Activated CD4-positive, alpha-beta T cell treated with anti-CD3 and anti-CD28 coated beads, Interleukin-2, amount 10 ng/mL, durations not matched to agents 24 days and 14 days (primary cell): ENCODE measurements at regions of chr9 and their contacts with region 1.

Region 1: DNA sequence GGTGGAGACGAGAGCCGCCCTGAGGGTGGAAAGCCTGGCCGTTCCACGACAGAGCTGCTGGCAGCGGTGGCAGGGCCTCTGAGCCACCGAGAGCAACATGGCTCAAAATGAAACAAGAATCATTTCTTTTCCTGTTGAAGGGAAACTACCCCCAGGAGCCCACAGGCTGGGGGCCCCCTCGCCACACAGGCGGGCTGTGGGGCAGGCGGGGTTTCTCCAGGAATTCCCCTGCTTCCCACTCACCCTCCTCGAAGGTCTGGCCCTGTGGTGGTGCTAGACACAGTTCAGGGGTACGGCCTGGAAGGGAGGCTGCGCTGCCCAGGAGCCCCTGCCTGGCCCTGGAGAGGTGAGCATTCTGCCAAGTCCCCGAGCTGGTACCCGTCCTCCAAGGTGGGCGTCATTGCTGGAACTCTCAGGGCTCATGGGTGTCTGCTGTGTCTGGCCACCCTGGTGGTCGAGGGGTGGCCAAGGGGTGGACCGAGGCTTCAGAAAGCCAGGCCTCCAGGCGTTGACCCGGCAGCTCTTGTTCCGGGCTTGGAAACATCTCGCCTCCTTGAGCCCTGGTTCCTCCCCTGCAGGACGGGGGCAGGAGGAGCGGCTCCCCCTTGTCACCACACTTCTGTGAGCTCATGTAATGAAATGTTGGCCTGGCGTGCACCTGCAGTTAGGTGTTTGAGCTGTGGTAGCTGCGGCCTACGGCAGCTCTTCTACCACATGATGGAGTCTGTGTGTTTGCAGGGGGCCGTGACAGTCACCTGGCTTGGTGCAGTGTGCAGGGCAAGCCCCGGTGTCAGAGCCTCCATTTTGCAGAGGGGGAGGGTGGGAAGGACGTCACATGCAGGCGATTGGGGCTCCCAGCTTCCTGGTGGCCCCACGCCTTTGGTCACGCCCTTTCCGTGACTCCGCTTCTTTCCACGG is 65.3 kb downstream of the RXRA start:
- DNase-seq: peak; percentile 87
- H3K4me3 Mint-ChIP-seq: peak overlapping the region; percentile 70
- H3K27ac Mint-ChIP-seq: peak overlapping the region; percentile 89
- H3K4me1 Mint-ChIP-seq: peaks cover 42% of the 10 kb centered on the region
- H3K27me3 Mint-ChIP-seq: peaks cover 23% of the 10 kb centered on the region

Region 2: GRCh38 chr9:134163353-134164196 is 228.0 kb before region 1 on chr9:
- intact Hi-C with region 1: loop called (anchors 5 kb)
- DNase-seq: peak; percentile 89
- H3K4me3 Mint-ChIP-seq: no peak overlapping the region
- H3K27ac Mint-ChIP-seq: no peak overlapping the region
- H3K4me1 Mint-ChIP-seq: peaks cover 20% of the 10 kb centered on the region
- H3K27me3 Mint-ChIP-seq: no peaks in the 10 kb centered on the region

Region 3: GRCh38 chr9:134325817-134326723 is 65.5 kb before region 1 on chr9 and contains the start of gene RXRA:
- intact Hi-C with region 1: loop called (anchors 5 kb)
- DNase-seq: peak; percentile 80
- H3K4me3 Mint-ChIP-seq: peak within 1 kb of the TSS; percentile 73
- H3K27ac Mint-ChIP-seq: no peak within 1 kb of the TSS
- H3K4me1 Mint-ChIP-seq: peaks cover 7% of the 10 kb centered on the region
- H3K27me3 Mint-ChIP-seq: peaks cover 34% of the 10 kb centered on the region
- total RNA-seq, gene RXRA: 4.0 and 4.8 TPM in 2 replicates

Region 4: DNA sequence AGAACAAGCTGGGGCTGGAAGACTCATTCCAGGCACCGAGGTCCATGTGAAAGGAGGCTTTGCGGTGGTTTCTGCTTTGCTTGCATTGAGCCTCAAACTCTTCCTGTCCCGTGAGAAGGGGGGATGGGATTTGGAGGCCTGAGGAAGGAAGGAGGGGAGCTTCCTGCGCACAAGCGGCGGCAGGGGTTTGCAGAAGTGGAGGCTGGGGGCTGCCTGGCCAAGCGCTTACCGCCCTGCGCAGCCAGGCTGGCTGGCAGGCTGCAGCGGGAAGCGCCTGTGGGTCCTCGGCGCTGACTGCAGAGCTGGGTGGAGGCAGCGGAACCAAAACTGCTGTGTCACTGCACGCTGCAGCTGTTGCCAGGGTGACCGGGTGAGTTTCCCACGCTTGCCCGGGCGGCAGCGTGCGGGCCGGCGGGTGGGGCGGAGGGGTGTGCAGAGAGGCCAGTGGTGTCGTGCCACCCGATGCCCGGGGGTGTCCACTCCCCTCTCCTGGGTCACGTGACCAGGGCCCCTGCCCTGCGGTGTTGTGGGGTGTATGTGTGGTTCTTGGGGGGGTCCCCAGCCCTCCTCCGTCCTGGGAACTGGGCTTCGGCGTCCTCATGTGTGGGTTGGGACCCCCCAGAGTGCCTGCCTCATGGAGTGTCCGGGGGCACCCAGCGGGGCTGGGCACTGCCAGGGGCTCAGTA is 15.7 kb after region 1 on chr9:
- intact Hi-C with region 1: loop called (anchors 2 kb)
- DNase-seq: peak; percentile 94
- H3K4me3 Mint-ChIP-seq: peak overlapping the region; percentile 72
- H3K27ac Mint-ChIP-seq: peak overlapping the region; percentile 54
- H3K4me1 Mint-ChIP-seq: peaks cover 25% of the 10 kb centered on the region
- H3K27me3 Mint-ChIP-seq: peaks cover 18% of the 10 kb centered on the region

Region 5: DNA sequence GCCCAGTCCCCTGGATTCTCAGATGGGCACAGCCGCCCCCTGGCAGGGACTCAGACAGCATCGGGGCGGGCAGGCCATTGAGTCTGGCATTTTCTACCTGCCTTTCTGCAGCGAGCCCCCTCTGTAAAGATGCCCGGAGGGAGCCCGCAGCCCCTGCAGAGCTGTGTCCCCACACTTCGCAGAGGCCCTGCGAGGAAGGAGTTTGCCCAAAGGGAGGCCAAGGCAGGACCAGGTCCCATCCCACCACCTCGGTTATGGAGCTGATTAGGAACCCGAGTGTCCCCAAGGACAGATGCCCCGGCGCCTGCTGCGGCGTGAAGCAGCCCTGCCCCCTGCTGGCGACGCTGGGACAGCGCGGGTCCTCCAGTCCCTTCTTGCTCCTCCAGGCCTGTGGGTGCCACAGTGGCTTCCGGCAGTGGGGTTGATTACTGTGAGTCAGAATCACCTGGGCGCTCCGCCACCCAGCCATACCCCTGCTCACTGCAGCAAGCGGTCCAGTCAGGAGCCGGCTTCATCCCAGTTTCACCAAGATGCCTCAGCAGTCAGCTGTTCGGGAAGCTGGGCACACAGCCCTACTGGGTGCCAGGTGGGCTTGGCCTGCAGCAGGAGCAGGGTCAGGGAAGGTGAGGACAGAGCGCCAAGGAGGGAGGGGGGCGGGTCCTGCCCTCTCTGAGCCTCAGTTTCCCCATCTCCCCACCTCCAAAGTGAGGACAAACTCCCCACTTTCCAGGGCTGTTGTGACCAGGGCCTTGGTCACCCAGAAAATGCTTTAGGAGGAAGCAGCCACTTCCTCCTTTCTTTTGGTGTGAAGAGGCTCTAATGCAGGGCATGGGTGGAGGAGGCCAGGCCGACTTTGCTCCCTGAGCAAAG is 51.8 kb after region 1 on chr9:
- intact Hi-C with region 1: loop called (anchors 1 kb)
- DNase-seq: peak; percentile 95
- H3K4me3 Mint-ChIP-seq: no peak overlapping the region
- H3K27ac Mint-ChIP-seq: no peak overlapping the region
- H3K4me1 Mint-ChIP-seq: peaks cover 6% of the 10 kb centered on the region
- H3K27me3 Mint-ChIP-seq: peaks cover 10% of the 10 kb centered on the region

Region 6: GRCh38 chr9:134983074-134983473 is 591.5 kb after region 1 on chr9:
- intact Hi-C with region 1: no loop called
- DNase-seq: no peak
- H3K4me3 Mint-ChIP-seq: no peak overlapping the region
- H3K27ac Mint-ChIP-seq: no peak overlapping the region
- H3K4me1 Mint-ChIP-seq: no peaks in the 10 kb centered on the region
- H3K27me3 Mint-ChIP-seq: no peaks in the 10 kb centered on the region